ENCODE measurements at regions of chr17 and their contacts with region 1.

Region 1: GRCh38 chr17:10115071-10115539 is 83.3 kb downstream of the GAS7 start:
- DNase-seq: peak; percentile 89 to 91
- ATAC-seq: peak; percentile 88 to 93 (median 90)
- H3K4me3 ChIP-seq: peak overlapping the region in 9 of 10 donors; percentile 5 to 43 (median 33)
- H3K27ac ChIP-seq: peak overlapping the region; percentile 84 to 97 (median 92)
- H3K4me1 ChIP-seq: peaks cover 6 to 83% (median 58%) of the 10 kb centered on the region in 9 donors
- H3K27me3 ChIP-seq: no peaks in the 10 kb centered on the region
- CTCF ChIP-seq: no peak

Region 2: DNA sequence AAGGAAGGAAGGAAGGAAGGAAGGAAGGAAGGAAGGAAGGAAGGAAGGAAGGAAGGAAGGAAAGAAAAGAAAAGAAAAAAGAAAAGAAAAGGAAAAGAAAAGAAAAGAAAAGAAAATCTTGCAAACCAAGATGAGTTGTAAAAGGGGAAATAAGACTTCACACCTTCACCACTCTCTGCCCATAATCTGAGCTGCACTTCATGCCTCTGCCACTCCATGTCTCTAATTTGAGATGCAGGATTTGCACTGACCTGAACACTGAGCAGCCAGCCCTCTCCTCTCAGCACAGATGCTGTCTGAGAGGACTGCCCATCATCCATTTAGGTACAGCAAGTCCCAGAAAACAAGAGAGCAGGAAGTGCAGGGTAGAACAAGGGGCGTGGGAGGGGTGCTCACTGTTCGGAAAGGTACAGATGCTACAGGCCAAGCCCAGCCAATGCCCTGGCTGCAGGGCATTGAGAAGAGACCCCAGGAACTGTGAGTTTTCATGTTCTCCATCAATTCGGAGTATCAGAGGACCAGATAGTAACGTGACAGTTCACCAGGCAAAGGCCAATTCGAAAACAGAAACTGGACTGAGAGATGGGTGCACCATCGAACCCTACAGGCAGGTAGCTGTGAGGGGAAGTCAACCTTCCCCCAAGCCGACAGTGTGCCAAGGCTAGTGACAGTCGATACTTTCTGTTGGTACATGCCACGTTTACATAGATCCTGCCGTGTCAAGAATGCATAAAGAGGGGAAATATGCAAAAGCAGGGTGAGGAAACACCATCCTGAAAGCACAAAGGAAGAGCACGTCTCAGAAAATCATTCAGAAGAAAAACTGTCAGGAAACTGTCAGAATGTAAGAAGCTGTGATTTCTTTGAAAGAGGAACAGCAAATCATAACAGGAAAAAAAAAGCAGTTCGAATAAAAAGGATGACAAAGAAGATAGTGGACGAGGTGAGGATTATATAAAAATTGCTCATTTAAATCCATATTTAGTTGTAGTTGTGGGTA is 68.0 kb before region 1 on chr17:
- intact Hi-C with region 1: loop called in 1 of 10 experiments (anchors 10 kb)
- DNase-seq: no peak
- ATAC-seq: no peak
- H3K4me3 ChIP-seq: no peak overlapping the region
- H3K27ac ChIP-seq: peak overlapping the region in 4 of 10 donors; percentile 4 to 33 (median 22)
- H3K4me1 ChIP-seq: peaks cover 0 to 61% (median 21%) of the 10 kb centered on the region in 9 donors
- H3K27me3 ChIP-seq: no peaks in the 10 kb centered on the region
- CTCF ChIP-seq: no peak

Region 3: GRCh38 chr17:10059369-10060211 is 55.5 kb before region 1 on chr17:
- intact Hi-C with region 1: loop called in 1 of 10 experiments (anchors 5 kb)
- DNase-seq: peak; percentile 60 to 70
- ATAC-seq: peak; percentile 46 to 79 (median 75)
- H3K4me3 ChIP-seq: peak overlapping the region in 1 of 10 donors; percentile 5
- H3K27ac ChIP-seq: peak overlapping the region in 8 of 10 donors; percentile 44 to 80 (median 67)
- H3K4me1 ChIP-seq: peaks cover 4 to 72% (median 39%) of the 10 kb centered on the region in 9 donors
- H3K27me3 ChIP-seq: no peaks in the 10 kb centered on the region
- CTCF ChIP-seq: no peak

Region 4: DNA sequence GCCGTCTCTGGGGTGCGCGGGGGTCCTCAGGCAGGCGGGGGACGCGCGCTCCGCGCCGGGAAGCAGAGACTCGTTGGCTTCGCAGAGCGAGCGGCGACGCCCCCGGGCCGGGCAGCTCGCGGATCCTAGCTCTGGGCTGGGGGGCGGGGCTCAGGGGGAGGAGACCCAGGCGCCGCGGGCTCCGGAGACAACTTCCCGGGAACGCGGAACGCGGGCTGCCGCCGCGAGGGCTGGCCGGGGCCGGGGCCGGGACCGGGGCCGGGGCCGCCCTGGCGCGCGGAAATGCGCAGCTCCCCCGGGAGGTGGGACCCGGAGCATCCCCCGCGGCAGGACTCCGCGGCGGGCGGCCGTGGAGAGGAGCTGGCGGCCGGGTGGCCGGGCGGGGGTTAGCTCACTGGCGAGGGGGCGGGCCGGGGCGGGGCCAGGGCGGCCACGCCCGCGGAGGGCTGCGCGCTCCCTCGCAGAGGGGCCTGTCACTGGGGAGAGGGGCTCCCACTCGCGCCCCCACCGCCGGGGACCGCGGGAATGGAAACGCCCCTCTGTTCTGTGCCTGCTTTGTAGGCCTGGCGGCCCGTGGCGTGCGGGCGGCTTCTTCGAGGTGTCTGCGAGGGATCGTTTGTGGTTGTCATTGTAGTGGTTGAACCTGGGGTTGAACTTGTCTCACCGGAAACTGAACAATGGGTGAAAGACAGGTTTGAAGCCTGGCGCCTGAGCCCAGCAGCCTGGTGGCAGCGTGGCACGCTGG is 83.6 kb after region 1 on chr17 and contains the start of gene GAS7:
- intact Hi-C with region 1: loop called in 4 of 10 experiments (anchors 5 to 10 kb)
- DNase-seq: peak; percentile 74
- ATAC-seq: peak in 7 of 8 donors; percentile 62 to 91 (median 71)
- H3K4me3 ChIP-seq: peak within 1 kb of the TSS; percentile 62 to 78 (median 72)
- H3K27ac ChIP-seq: peak within 1 kb of the TSS in 8 of 10 donors; percentile 24 to 88 (median 80)
- H3K4me1 ChIP-seq: peaks cover 0 to 29% (median 11%) of the 10 kb centered on the region in 9 donors
- H3K27me3 ChIP-seq: peaks cover 0 to 26% (median 12%) of the 10 kb centered on the region in 7 donors
- CTCF ChIP-seq: no peak
- total RNA-seq, gene GAS7: 39.6 to 111 (median 67.7) TPM

Region 5: GRCh38 chr17:10314329-10314728 is 199.2 kb after region 1 on chr17:
- intact Hi-C with region 1: no loop called
- DNase-seq: no peak
- ATAC-seq: no peak
- H3K4me3 ChIP-seq: no peak overlapping the region
- H3K27ac ChIP-seq: no peak overlapping the region
- H3K4me1 ChIP-seq: peaks cover 0 to 9% (median 0%) of the 10 kb centered on the region in 9 donors
- H3K27me3 ChIP-seq: peaks cover 0 to 18% (median 2%) of the 10 kb centered on the region in 7 donors
- CTCF ChIP-seq: no peak

Region 6: DNA sequence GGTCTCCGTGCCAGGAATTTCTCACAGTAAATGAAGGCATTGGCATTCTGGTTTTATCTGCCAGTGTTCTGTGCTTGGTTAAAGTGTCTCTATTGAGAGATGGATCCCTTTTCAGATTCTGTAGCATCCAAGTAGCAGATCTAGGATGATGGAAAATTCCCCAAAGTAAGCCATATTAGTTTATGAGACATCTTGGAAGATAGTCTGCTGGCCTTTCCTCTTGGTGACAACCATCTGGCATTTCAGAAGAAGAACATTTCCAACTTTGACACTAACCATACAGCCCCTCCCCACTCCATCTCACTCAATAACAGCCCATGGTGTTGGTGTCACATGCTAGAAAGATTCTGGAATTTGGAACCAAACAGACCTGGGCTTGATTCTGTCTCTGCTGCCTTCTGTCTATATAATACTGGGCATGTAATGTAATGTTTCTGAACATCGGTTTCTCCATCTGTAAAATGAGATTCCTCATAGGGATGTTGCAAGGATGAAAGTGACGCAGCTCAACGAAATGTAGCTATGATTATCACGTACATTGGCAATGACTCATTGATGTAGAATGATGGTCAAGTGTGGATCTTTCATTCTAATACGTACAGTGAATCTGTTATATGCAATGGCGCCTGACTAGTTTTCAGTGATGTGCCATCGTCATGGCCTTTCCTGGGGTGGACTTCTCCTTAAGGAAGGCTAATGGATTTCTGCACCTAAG is 755.4 kb after region 1 on chr17:
- intact Hi-C with region 1: no loop called
- DNase-seq: no peak
- ATAC-seq: no peak
- H3K4me3 ChIP-seq: no peak overlapping the region
- H3K27ac ChIP-seq: no peak overlapping the region
- H3K4me1 ChIP-seq: no peaks in the 10 kb centered on the region
- H3K27me3 ChIP-seq: peaks cover 0 to 12% (median 0%) of the 10 kb centered on the region in 7 donors
- CTCF ChIP-seq: no peak

Measured in heart right ventricle (tissue), 16 donors.